CD4-positive, alpha-beta T cell (primary cell): ENCODE measurements at regions of chr13 and their contacts with region 1.

Region 1: GRCh38 chr13:20703780-20704445 is 414 bp downstream of the IL17D start:
- DNase-seq: peak; percentile 50 to 91 (median 70)
- ATAC-seq: peak; percentile 91
- H3K4me3 ChIP-seq: no peak overlapping the region
- H3K4me3 Mint-ChIP-seq: no peak overlapping the region
- H3K27ac ChIP-seq: no peak overlapping the region
- H3K27ac Mint-ChIP-seq: no peak overlapping the region
- H3K4me1 ChIP-seq: peaks cover 14% of the 10 kb centered on the region
- H3K4me1 Mint-ChIP-seq: peaks cover 7% of the 10 kb centered on the region
- H3K27me3 ChIP-seq: peaks cover 18 to 33% of the 10 kb centered on the region in 2 experiments
- H3K27me3 Mint-ChIP-seq: peaks cover 35% of the 10 kb centered on the region
- CTCF ChIP-seq: peak; percentile 21

Region 2: GRCh38 chr13:20192158-20192835 is 511.6 kb before region 1 on chr13:
- CTCF ChIA-PET with region 1: no interaction called
- POLR2A ChIA-PET with region 1: no interaction called
- intact Hi-C with region 1: loop called (anchors 5 to 10 kb)
- DNase-seq: peak in 3 of 14 experiments; percentile 11 to 40 (median 38)
- ATAC-seq: no peak
- H3K4me3 ChIP-seq: peak overlapping the region; percentile 44
- H3K4me3 Mint-ChIP-seq: peak overlapping the region; percentile 75
- H3K27ac ChIP-seq: no peak overlapping the region
- H3K27ac Mint-ChIP-seq: no peak overlapping the region
- H3K4me1 ChIP-seq: peaks cover 28% of the 10 kb centered on the region
- H3K4me1 Mint-ChIP-seq: peaks cover 25% of the 10 kb centered on the region
- H3K27me3 ChIP-seq: peaks cover 47 to 66% of the 10 kb centered on the region in 2 experiments
- H3K27me3 Mint-ChIP-seq: peaks cover 56% of the 10 kb centered on the region
- CTCF ChIP-seq: no peak

Region 3: DNA sequence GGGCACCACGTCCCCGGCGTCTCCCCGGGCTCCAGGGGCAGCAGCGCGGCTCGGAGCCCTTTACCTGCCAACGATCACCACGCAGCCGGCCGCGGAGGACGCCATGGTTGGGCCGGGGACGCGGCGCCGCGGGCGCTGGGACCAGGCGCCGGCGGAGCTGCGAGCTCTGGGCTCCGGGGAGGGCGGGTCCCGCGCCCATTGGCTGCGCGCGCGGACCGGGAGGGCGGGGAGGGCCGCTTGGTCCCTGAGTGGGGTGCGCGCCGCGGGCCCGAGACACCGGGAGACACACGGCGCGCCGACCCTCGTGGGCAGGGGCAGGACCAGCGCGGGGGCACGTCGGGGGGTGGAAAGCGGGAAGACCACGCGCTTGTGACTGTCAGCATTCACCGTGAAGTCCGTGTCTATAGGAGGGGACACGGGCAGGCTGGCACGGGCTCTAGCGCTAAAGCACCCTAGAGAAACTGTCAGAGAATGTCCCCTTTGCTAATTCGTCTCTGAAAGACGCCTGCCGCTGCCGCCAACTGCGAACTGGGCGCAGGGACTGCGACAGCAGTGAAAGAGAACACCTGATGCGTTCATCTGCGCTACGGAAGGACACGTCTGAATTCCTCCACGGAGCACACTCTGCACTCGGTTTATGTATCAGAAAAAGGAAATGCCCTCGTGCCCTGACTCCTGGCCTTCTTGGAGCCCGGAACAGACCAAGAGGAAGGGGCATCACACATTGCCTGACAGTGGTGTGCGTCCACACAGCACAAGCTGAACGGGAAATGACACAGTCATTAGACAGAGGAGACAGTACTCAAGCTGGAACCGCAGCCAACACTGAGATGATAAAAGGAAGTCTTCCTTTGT is 178.0 kb before region 1 on chr13 and contains the start of gene CRYL1:
- CTCF ChIA-PET with region 1: no interaction called
- POLR2A ChIA-PET with region 1: no interaction called
- intact Hi-C with region 1: loop called in 1 of 2 experiments (anchors 10 kb)
- DNase-seq: peak; percentile 53 to 88 (median 70)
- ATAC-seq: peak; percentile 86
- H3K4me3 ChIP-seq: peak within 1 kb of the TSS; percentile 68
- H3K4me3 Mint-ChIP-seq: peak within 1 kb of the TSS; percentile 97
- H3K27ac ChIP-seq: peak within 1 kb of the TSS; percentile 59 to 66
- H3K27ac Mint-ChIP-seq: peak within 1 kb of the TSS; percentile 94
- H3K4me1 ChIP-seq: peaks cover 21% of the 10 kb centered on the region
- H3K4me1 Mint-ChIP-seq: peaks cover 28% of the 10 kb centered on the region
- H3K27me3 ChIP-seq: no peaks in the 10 kb centered on the region
- H3K27me3 Mint-ChIP-seq: peaks cover 6% of the 10 kb centered on the region
- CTCF ChIP-seq: no peak
- total RNA-seq, gene CRYL1: 7.9 to 8.0 TPM

Region 4: GRCh38 chr13:20566898-20567874 is 136.7 kb before region 1 on chr13 and contains the start of gene IFT88:
- CTCF ChIA-PET with region 1: no interaction called
- POLR2A ChIA-PET with region 1: no interaction called
- intact Hi-C with region 1: loop called in 1 of 2 experiments (anchors 2 kb)
- DNase-seq: peak; percentile 57 to 87 (median 78)
- ATAC-seq: peak; percentile 87
- H3K4me3 ChIP-seq: peak within 1 kb of the TSS; percentile 69
- H3K4me3 Mint-ChIP-seq: peak within 1 kb of the TSS; percentile 96
- H3K27ac ChIP-seq: peak within 1 kb of the TSS; percentile 53 to 60
- H3K27ac Mint-ChIP-seq: peak within 1 kb of the TSS; percentile 82
- H3K4me1 ChIP-seq: peaks cover 15% of the 10 kb centered on the region
- H3K4me1 Mint-ChIP-seq: peaks cover 19% of the 10 kb centered on the region
- H3K27me3 ChIP-seq: no peaks in the 10 kb centered on the region
- H3K27me3 Mint-ChIP-seq: no peaks in the 10 kb centered on the region
- CTCF ChIP-seq: no peak
- total RNA-seq, gene IFT88: 9.0 to 9.5 TPM